ENCODE measurements at regions of chr9 and their contacts with region 1.

Region 1: GRCh38 chr9:114487607-114488300 is 17.5 kb downstream of the WHRN start:
- DNase-seq: peak; percentile 58 to 74 (median 62)
- H3K4me3 ChIP-seq: no peak overlapping the region
- H3K4me3 Mint-ChIP-seq: no peak overlapping the region
- H3K27ac ChIP-seq: no peak overlapping the region
- H3K27ac Mint-ChIP-seq: peak overlapping the region in 1 of 7 donors; percentile 62
- H3K4me1 ChIP-seq: peaks cover 13 to 15% of the 10 kb centered on the region in 2 donors
- H3K4me1 Mint-ChIP-seq: peaks cover 25% of the 10 kb centered on the region
- H3K27me3 ChIP-seq: no peaks in the 10 kb centered on the region
- H3K27me3 Mint-ChIP-seq: peaks cover 0 to 6% (median 2%) of the 10 kb centered on the region in 3 donors
- CTCF ChIP-seq: peak; percentile 94

Region 2: GRCh38 chr9:114405294-114406034 is 82.3 kb before region 1 on chr9:
- intact Hi-C with region 1: loop called (anchors 5 to 10 kb)
- DNase-seq: peak; percentile 74 to 82 (median 79)
- H3K4me3 ChIP-seq: no peak overlapping the region
- H3K4me3 Mint-ChIP-seq: no peak overlapping the region
- H3K27ac ChIP-seq: no peak overlapping the region
- H3K27ac Mint-ChIP-seq: peak overlapping the region in 1 of 7 donors; percentile 68
- H3K4me1 ChIP-seq: peaks cover 0 to 13% of the 10 kb centered on the region in 2 donors
- H3K4me1 Mint-ChIP-seq: peaks cover 14% of the 10 kb centered on the region
- H3K27me3 ChIP-seq: no peaks in the 10 kb centered on the region
- H3K27me3 Mint-ChIP-seq: peaks cover 0 to 4% (median 1%) of the 10 kb centered on the region in 3 donors
- CTCF ChIP-seq: peak; percentile 82

Region 3: DNA sequence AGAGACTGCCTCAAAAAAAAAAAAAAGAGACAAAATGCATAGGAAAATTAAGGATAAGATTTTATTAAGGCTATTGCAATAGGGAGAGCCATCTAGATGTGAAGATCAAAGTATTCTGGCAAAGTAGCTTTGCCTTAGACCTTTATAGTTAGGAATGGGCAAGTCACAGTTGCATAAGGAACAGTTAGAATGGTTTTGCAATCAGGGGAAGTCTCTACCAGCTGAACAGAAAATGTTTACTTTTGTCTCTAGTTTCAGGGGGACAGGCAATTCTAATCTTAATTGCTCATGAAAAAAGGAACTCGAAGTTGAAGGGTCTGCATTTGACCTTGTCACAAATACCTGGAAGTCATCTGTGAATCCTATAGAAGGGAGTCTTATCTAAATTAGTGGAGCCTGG is 86.7 kb after region 1 on chr9:
- intact Hi-C with region 1: loop called in 1 of 2 experiments (anchors 10 kb)
- DNase-seq: peak in 2 of 3 donors; percentile 51 to 52
- H3K4me3 ChIP-seq: no peak overlapping the region
- H3K4me3 Mint-ChIP-seq: peak overlapping the region in 1 of 2 donors; percentile 64
- H3K27ac ChIP-seq: peak overlapping the region in 1 of 2 donors; percentile 25
- H3K27ac Mint-ChIP-seq: peak overlapping the region; percentile 20 to 89 (median 71)
- H3K4me1 ChIP-seq: peaks cover 11 to 12% of the 10 kb centered on the region in 2 donors
- H3K4me1 Mint-ChIP-seq: peaks cover 23% of the 10 kb centered on the region
- H3K27me3 ChIP-seq: no peaks in the 10 kb centered on the region
- H3K27me3 Mint-ChIP-seq: peaks cover 0 to 3% (median 0%) of the 10 kb centered on the region in 3 donors
- CTCF ChIP-seq: no peak

Region 4: DNA sequence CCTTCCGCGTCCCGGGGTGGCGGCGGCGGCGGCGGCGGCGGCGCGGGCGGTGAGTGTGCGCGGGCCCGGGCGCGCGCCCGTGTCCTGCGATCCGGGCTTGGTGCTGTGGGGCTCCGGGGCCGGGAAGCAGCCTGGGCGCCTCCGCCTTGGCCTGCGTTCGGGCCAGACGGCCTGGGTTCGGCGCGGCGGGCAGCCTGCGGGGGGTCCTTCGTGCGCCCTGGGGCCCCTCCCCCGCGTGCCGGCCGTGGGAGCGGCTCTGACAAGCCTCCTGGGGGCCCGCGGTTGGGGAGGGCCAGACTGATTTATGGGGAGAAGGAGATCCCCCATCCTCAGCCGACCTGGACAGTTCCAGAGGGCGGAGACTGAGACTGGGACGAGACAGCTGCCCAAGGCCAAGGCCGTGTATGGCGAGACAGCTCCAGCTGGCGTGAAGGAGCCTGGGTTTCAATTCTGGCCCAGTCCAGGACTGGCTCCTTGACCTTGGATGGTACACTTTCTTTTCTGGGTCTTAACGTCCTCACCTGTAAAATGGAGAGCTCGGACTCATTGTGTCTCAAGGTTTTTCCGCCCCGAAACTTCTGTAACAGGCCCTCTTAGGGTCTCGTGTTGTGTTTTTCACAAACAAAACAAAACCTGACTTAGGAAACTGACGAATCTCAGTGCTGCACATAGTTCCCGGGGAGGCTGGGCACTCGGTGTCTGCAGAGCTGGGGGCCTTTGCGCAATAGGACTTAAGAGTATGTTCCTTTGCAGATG is 123.9 kb after region 1 on chr9:
- intact Hi-C with region 1: loop called in 1 of 2 experiments (anchors 10 kb)
- DNase-seq: peak; percentile 55 to 70 (median 69)
- H3K4me3 ChIP-seq: peak overlapping the region; percentile 62 to 95 (median 82)
- H3K4me3 Mint-ChIP-seq: peak overlapping the region; percentile 84 to 92
- H3K27ac ChIP-seq: peak overlapping the region; percentile 87 to 90
- H3K27ac Mint-ChIP-seq: peak overlapping the region; percentile 88 to 96 (median 92)
- H3K4me1 ChIP-seq: peaks cover 45 to 60% of the 10 kb centered on the region in 2 donors
- H3K4me1 Mint-ChIP-seq: peaks cover 66% of the 10 kb centered on the region
- H3K27me3 ChIP-seq: no peaks in the 10 kb centered on the region
- H3K27me3 Mint-ChIP-seq: peaks cover 0 to 3% (median 2%) of the 10 kb centered on the region in 3 donors
- CTCF ChIP-seq: no peak

Measured in CD14-positive monocyte (primary cell).